Activated CD8-positive, alpha-beta memory T cell treated with anti-CD3 and anti-CD28 coated beads, Interleukin-2, amount 10 ng/mL, durations not matched to agents 7 days and 5 days (primary cell): ENCODE measurements at regions of chr17 and their contacts with region 1.

Region 1: DNA sequence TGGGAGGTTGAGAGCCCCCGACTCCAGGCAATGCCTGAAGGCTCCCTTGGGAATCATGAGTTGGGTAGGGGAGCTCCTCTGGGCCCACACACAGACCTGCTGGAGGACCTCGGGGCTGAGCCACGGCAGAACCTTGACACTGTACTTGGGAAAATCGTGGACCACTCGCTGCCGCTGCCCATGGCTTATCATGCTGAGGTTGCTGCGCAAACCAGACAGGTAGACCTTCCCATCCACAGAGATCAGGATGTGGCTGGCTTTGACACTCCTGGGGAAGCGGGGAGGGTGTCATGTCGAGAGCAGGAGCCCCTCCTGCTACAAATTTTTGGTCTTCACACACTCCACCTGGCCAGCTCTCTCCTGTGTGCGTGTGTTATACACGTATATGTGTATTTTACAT is 7.2 kb upstream of the LIMD2 start:
- DNase-seq: peak; percentile 41
- ATAC-seq: peak; percentile 2
- H3K4me3 Mint-ChIP-seq: no peak overlapping the region
- H3K27ac Mint-ChIP-seq: peak overlapping the region; percentile 71
- H3K4me1 Mint-ChIP-seq: peaks cover 69% of the 10 kb centered on the region
- H3K27me3 Mint-ChIP-seq: no peaks in the 10 kb centered on the region

Region 2: GRCh38 chr17:63722403-63722802 is 15.3 kb after region 1 on chr17:
- CTCF ChIA-PET with region 1: interaction called, 17 read pairs
- DNase-seq: no peak
- ATAC-seq: no peak
- H3K4me3 Mint-ChIP-seq: no peak overlapping the region
- H3K27ac Mint-ChIP-seq: no peak overlapping the region
- H3K4me1 Mint-ChIP-seq: no peaks in the 10 kb centered on the region
- H3K27me3 Mint-ChIP-seq: no peaks in the 10 kb centered on the region

Region 3: DNA sequence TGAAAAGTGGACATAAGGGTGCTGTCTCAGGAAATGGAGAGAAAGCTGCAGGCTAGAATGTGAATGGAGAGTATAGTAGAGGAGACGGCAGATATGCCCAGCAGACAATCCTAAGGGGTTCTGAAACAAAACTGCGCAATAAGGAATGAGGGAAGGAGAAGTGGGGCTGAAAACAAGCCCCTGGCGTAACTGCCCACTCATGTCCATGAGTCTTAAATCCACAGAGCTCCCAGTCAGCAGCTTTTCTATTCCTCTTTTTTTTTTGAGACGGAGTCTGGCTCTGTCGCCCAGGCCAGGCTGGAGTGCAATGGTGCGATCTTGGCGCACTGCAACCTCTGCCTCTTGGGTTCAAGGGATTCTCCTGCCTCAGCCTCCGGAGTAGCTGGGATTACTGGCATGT is 28.5 kb after region 1 on chr17:
- CTCF ChIA-PET with region 1: interaction called, 15 read pairs
- DNase-seq: no peak
- ATAC-seq: no peak
- H3K4me3 Mint-ChIP-seq: no peak overlapping the region
- H3K27ac Mint-ChIP-seq: no peak overlapping the region
- H3K4me1 Mint-ChIP-seq: peaks cover 16% of the 10 kb centered on the region
- H3K27me3 Mint-ChIP-seq: no peaks in the 10 kb centered on the region